Esophagus squamous epithelium (tissue), 5 donors: ENCODE measurements at regions of chr6 and their contacts with region 1.

Region 1: GRCh38 chr6:41027799-41028628 is 11.0 kb downstream of the UNC5CL start:
- DNase-seq: no peak
- H3K4me3 ChIP-seq: peak overlapping the region; percentile 28 to 69 (median 54)
- H3K27ac ChIP-seq: peak overlapping the region; percentile 22 to 86 (median 66)
- H3K4me1 ChIP-seq: peaks cover 12 to 23% (median 15%) of the 10 kb centered on the region in 3 donors
- H3K27me3 ChIP-seq: no peaks in the 10 kb centered on the region
- CTCF ChIP-seq: peak; percentile 96 to 99 (median 99)
- POLR2A ChIP-seq: no peak

Region 2: DNA sequence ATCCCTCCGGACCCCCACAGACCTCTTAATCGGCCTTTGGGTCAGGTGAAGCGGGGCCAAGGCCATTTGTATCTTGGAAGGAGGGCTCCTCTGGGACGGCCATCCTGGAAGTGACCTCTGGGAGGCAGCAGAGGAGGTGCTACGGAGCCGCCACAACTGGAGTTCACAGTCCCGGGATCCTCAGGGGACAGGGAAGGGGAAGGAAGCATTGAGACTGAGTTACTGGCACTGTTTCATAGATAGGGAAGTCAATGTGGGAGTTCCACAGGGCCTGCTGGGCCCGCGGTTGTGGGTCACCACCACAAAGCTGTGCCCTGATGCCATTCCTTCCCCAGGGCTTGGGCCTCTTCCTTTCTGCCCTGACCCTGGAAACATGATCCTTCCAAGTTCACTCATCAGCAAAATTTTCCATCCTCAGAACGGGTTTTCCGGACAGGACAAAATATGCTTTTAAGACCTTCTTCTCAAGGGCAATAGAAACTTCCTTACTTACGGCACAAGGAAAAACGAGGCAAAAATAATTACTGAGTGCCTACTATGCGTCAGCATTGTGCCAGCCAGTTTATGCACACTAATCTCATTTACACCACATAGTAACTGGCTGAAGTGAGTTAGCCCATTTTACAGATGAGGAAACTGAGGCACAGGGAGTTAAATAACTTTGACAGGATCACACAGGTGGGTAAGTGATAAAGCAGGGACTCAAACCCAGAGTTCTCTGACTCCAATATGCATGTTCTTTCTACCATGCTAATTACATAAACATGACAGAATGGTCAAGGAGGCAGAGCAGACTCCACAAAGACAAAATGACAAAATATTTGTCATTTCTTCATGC is 132.8 kb before region 1 on chr6:
- intact Hi-C with region 1: loop called (anchors 10 kb)
- DNase-seq: no peak
- H3K4me3 ChIP-seq: no peak overlapping the region
- H3K27ac ChIP-seq: no peak overlapping the region
- H3K4me1 ChIP-seq: no peaks in the 10 kb centered on the region
- H3K27me3 ChIP-seq: no peaks in the 10 kb centered on the region
- CTCF ChIP-seq: peak in 4 of 6 experiments; percentile 34 to 58 (median 43)
- POLR2A ChIP-seq: no peak

Region 3: DNA sequence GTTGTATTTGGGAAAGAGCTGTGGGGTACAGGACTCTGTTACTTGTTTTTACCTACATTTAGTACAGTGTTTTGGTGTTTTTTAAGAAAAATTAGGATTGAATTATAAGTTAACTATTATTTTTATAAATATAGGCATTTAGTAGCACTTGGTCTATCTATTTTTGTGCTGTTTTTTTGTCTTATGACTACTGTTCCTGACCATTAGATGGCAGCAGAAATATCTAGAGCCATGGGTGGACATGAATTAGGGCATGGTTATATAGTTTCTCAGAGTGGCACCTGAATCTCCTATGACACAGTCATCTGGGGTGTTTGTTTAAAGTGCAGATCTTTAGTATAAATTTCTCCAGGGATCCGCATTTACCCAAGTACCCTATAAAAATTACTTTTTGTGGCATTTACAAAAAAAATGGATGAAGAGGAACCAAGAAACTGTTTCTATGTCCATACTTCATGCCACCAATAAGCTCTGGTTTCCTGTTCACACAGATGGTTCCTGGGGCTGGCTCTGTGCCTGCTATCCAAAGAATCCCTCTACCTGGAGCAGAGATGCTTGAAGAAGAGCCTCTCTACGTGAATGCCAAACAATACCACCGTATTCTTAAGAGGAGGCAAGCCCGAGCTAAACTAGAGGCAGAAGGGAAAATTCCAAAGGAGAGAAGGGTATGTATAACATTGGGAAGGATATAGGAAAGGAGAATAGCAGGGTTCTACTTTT is 64.6 kb after region 1 on chr6:
- intact Hi-C with region 1: no loop called
- DNase-seq: no peak
- H3K4me3 ChIP-seq: no peak overlapping the region
- H3K27ac ChIP-seq: no peak overlapping the region
- H3K4me1 ChIP-seq: no peaks in the 10 kb centered on the region
- H3K27me3 ChIP-seq: no peaks in the 10 kb centered on the region
- CTCF ChIP-seq: peak in 1 of 6 experiments; percentile 34
- POLR2A ChIP-seq: no peak